Thyroid gland (tissue), 4 donors: ENCODE measurements at regions of chr12 and their contacts with region 1.

Region 1: GRCh38 chr12:116135209-116135930 is 142.1 kb downstream of the MED13L start:
- DNase-seq: peak in 1 of 2 donors; percentile 28
- H3K4me3 ChIP-seq: no peak overlapping the region
- H3K27ac ChIP-seq: peak overlapping the region in 2 of 3 donors; percentile 40 to 42
- H3K4me1 ChIP-seq: peaks cover 48 to 54% of the 10 kb centered on the region in 2 donors
- H3K27me3 ChIP-seq: no peaks in the 10 kb centered on the region
- CTCF ChIP-seq: no peak
- POLR2A ChIP-seq: no peak

Region 2: GRCh38 chr12:115667116-115667515 is 468.3 kb before region 1 on chr12:
- intact Hi-C with region 1: no loop called
- DNase-seq: no peak
- H3K4me3 ChIP-seq: no peak overlapping the region
- H3K27ac ChIP-seq: no peak overlapping the region
- H3K4me1 ChIP-seq: peaks cover 0 to 1% of the 10 kb centered on the region in 2 donors
- H3K27me3 ChIP-seq: no peaks in the 10 kb centered on the region
- CTCF ChIP-seq: no peak
- POLR2A ChIP-seq: no peak

Region 3: GRCh38 chr12:116026768-116027550 is 108.4 kb before region 1 on chr12:
- intact Hi-C with region 1: no loop called
- DNase-seq: no peak
- H3K4me3 ChIP-seq: no peak overlapping the region
- H3K27ac ChIP-seq: no peak overlapping the region
- H3K4me1 ChIP-seq: peaks cover 3 to 8% of the 10 kb centered on the region in 2 donors
- H3K27me3 ChIP-seq: no peaks in the 10 kb centered on the region
- CTCF ChIP-seq: no peak
- POLR2A ChIP-seq: no peak

Region 4: GRCh38 chr12:116076399-116076798 is 59.0 kb before region 1 on chr12:
- intact Hi-C with region 1: loop called (anchors 10 kb)
- DNase-seq: no peak
- H3K4me3 ChIP-seq: no peak overlapping the region
- H3K27ac ChIP-seq: no peak overlapping the region
- H3K4me1 ChIP-seq: peaks cover 0 to 9% of the 10 kb centered on the region in 2 donors
- H3K27me3 ChIP-seq: no peaks in the 10 kb centered on the region
- CTCF ChIP-seq: no peak
- POLR2A ChIP-seq: no peak

Region 5: GRCh38 chr12:116087962-116088361 is 47.4 kb before region 1 on chr12:
- intact Hi-C with region 1: no loop called
- DNase-seq: no peak
- H3K4me3 ChIP-seq: no peak overlapping the region
- H3K27ac ChIP-seq: no peak overlapping the region
- H3K4me1 ChIP-seq: peaks cover 8 to 21% of the 10 kb centered on the region in 2 donors
- H3K27me3 ChIP-seq: no peaks in the 10 kb centered on the region
- CTCF ChIP-seq: no peak
- POLR2A ChIP-seq: no peak